Caco-2 (cell line): ENCODE measurements at regions of chr22 and their contacts with region 1.

Region 1: DNA sequence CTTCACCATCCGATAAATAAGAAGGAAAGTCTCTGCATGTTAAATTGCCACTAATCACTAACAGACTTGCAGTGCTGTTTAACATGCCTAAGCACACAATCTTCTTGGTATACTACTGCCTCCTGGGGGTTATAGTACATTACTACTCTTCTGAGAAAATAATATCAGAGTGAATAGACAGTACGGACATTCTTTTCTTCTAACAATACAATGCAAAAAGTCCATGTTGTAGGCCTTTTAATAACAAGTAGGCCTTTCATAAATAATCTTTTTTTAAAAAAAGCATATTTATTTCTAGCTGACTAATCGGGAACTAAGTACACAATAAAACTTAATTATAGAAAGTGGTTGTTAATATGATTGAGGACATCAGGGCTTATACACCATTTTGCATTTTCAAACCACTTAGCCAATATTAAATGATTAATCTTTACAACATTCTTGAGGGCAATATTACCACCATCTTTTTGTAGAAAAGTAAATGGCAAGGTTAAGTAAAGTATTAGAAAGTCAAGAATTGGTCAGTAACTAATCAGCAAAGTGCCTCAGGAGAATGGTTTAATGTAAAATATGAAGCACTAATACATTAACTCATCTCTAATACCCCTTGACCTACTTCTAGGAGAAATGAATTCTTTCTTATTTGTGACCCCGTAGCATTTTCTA is 84.7 kb downstream of the TTC28 start:
- DNase-seq: peak in 1 of 2 experiments; percentile 44
- H3K4me3 ChIP-seq: no peak overlapping the region
- H3K4me3 Mint-ChIP-seq: no peak overlapping the region
- H3K27ac Mint-ChIP-seq: no peak overlapping the region
- H3K4me1 ChIP-seq: no peaks in the 10 kb centered on the region
- H3K4me1 Mint-ChIP-seq: no peaks in the 10 kb centered on the region
- H3K27me3 ChIP-seq: no peaks in the 10 kb centered on the region
- H3K27me3 Mint-ChIP-seq: peaks cover 6% of the 10 kb centered on the region
- CTCF ChIP-seq: peak; percentile 53 to 67

Region 2: DNA sequence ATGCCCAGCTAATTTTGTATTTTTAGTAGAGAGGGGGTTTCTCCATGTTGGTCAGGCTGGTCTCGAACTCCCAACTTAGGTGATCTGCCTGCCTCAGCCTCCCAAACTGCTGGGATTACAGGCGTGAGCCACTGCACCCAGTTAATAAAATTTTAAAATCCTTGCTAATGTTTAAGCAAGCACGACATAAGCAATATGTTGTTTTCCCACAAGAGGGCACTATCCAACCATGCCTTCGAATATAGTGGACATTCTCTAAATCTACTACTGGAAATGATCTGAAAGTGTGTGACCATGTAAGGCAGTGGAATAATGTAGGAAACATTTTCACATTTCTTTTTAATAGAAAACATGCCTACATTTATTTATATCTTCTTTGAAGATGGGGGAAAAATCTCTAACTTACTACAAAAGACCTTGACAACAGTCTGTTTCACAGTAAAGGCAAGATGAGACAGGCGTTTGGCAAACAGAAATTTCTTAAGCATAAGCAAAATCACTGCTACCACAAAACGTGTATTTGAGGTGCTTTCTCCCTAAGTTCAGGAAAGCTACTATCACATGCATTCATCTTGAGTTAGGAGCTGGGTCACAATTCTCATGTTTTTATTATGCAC is 714.0 kb before region 1 on chr22:
- CTCF ChIA-PET with region 1: no interaction called
- POLR2A ChIA-PET with region 1: no interaction called
- intact Hi-C with region 1: loop called (anchors 10 kb)
- DNase-seq: peak in 1 of 2 experiments; percentile 56
- H3K4me3 ChIP-seq: no peak overlapping the region
- H3K4me3 Mint-ChIP-seq: no peak overlapping the region
- H3K27ac Mint-ChIP-seq: no peak overlapping the region
- H3K4me1 ChIP-seq: no peaks in the 10 kb centered on the region
- H3K4me1 Mint-ChIP-seq: peaks cover 6% of the 10 kb centered on the region
- H3K27me3 ChIP-seq: no peaks in the 10 kb centered on the region
- H3K27me3 Mint-ChIP-seq: no peaks in the 10 kb centered on the region
- CTCF ChIP-seq: peak; percentile 38 to 68

Region 3: GRCh38 chr22:28019881-28020871 is 574.8 kb before region 1 on chr22:
- CTCF ChIA-PET with region 1: interaction called, 4 read pairs
- POLR2A ChIA-PET with region 1: no interaction called
- intact Hi-C with region 1: loop called (anchors 1 kb)
- DNase-seq: peak; percentile 71 to 82
- H3K4me3 ChIP-seq: no peak overlapping the region
- H3K4me3 Mint-ChIP-seq: no peak overlapping the region
- H3K27ac Mint-ChIP-seq: no peak overlapping the region
- H3K4me1 ChIP-seq: peaks cover 7% of the 10 kb centered on the region; the same call in 1 of the 2 replicates
- H3K4me1 Mint-ChIP-seq: no peaks in the 10 kb centered on the region
- H3K27me3 ChIP-seq: no peaks in the 10 kb centered on the region
- H3K27me3 Mint-ChIP-seq: no peaks in the 10 kb centered on the region
- CTCF ChIP-seq: peak; percentile 91 to 93

Region 4: DNA sequence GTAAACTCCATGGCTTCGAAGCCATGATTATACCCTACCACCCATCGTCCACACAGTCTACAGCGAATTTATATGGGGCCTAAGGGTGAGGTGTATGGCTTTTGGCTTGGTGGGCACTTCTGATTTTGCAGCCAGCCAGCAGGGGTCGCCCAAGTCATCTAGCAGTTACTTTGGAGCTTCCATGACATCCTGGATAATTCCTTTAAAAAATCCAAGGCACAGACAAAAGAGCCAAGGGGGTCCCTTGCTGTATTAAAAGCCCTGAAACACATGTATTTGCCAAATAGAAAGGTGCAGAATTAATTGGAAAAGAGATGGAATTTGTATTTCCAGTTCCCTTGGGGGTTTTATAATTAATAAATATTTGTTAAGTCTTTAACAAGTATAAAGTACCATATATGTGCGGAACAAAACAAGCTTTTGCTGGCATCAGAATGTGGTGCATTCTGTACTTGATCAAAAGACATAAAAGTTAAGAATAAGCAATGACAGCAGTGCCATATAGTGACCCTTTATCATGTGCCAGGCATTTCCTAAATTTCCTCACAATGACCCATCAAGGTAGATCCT is 543.1 kb before region 1 on chr22:
- CTCF ChIA-PET with region 1: no interaction called
- POLR2A ChIA-PET with region 1: no interaction called
- intact Hi-C with region 1: loop called (anchors 1 kb)
- DNase-seq: peak; percentile 69 to 77
- H3K4me3 ChIP-seq: no peak overlapping the region
- H3K4me3 Mint-ChIP-seq: no peak overlapping the region
- H3K27ac Mint-ChIP-seq: no peak overlapping the region
- H3K4me1 ChIP-seq: no peaks in the 10 kb centered on the region
- H3K4me1 Mint-ChIP-seq: no peaks in the 10 kb centered on the region
- H3K27me3 ChIP-seq: no peaks in the 10 kb centered on the region
- H3K27me3 Mint-ChIP-seq: peaks cover 3% of the 10 kb centered on the region
- CTCF ChIP-seq: peak; percentile 75 to 89

Region 5: DNA sequence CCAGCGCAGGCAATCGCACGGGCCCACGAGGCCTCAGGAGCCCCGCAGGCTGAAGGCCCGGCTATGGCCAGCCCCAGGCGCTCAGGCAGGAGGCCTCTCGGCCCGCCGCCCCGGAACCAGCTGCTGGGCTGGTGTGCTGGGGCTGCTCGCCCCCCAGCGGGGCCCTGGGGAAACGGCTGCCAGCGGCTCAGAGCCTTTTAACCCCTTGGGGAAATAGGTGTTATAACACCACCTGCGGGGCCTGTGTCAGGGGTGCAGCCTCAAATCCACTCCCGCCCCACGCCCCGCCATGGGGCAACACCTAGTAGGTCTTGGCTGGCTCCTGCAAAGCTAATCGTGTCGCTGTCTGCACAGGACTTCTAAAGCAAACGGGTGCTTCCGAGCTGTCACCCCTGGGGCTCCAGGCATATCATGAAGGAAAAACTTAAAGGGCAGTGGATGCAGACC is 152.6 kb before region 1 on chr22:
- CTCF ChIA-PET with region 1: no interaction called
- POLR2A ChIA-PET with region 1: no interaction called
- intact Hi-C with region 1: loop called (anchors 1 kb)
- DNase-seq: peak; percentile 82 to 90
- H3K4me3 ChIP-seq: peak overlapping the region; percentile 56
- H3K4me3 Mint-ChIP-seq: peak overlapping the region; percentile 85
- H3K27ac Mint-ChIP-seq: peak overlapping the region; percentile 86
- H3K4me1 ChIP-seq: no peaks in the 10 kb centered on the region
- H3K4me1 Mint-ChIP-seq: no peaks in the 10 kb centered on the region
- H3K27me3 ChIP-seq: no peaks in the 10 kb centered on the region
- H3K27me3 Mint-ChIP-seq: peaks cover 6% of the 10 kb centered on the region
- CTCF ChIP-seq: peak; percentile 86 to 94

Region 6: DNA sequence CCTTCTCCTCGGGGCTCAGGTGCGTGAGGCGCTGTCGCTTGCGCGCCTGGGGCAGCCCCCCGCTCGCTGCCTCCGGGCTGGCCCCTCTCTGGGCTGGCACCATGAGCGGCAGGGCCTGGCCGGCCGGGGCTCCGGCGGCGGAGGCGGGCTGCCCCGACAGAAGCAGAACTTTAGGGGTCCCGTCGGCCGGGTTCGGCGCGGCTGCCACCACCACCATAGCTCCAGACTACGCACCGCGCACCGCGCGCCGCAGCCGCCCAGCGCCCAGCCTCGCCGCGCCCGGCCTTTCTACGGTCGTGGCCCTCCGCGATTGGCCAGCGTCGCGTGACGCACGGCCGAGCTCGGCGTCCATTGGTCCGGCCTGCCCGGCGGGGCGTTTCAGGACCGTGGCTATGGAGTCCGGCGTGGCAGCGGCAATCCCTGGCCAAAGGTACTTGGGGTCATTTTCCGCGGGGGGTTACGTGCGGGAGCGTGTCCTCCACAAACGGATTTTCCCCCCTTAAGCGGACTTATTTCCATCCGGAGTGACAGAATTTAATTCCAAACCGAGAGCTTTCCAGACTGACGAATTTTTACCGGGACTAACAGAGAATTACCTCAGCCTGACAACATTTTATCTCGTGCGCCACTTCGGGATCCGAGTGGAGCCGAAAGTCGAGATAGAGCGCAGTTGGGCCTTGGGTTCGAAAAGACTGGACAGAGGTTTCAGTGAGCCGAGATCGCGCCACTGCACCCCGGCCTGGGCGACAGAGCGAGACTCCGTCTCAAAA is 205.6 kb after region 1 on chr22 and contains the start of gene XBP1:
- CTCF ChIA-PET with region 1: no interaction called
- POLR2A ChIA-PET with region 1: interaction called, 10 read pairs
- intact Hi-C with region 1: no loop called
- DNase-seq: peak; percentile 92 to 96
- H3K4me3 ChIP-seq: peak within 1 kb of the TSS; percentile 94
- H3K4me3 Mint-ChIP-seq: peak within 1 kb of the TSS; percentile 93
- H3K27ac Mint-ChIP-seq: peak within 1 kb of the TSS; percentile 99
- H3K4me1 ChIP-seq: peaks cover 17% of the 10 kb centered on the region
- H3K4me1 Mint-ChIP-seq: peaks cover 19% of the 10 kb centered on the region
- H3K27me3 ChIP-seq: no peaks in the 10 kb centered on the region
- H3K27me3 Mint-ChIP-seq: no peaks in the 10 kb centered on the region
- CTCF ChIP-seq: no peak
- total RNA-seq, gene XBP1: 215 and 225 TPM in 2 replicates